RWPE1 (cell line): ENCODE measurements at regions of chr1 and their contacts with region 1.

Region 1: GRCh38 chr1:201385299-201385891 is 7.9 kb upstream of the TNNT2 start:
- DNase-seq: peak; percentile 89
- H3K27ac ChIP-seq: peak overlapping the region; percentile 71
- CTCF ChIP-seq: peak; percentile 89

Region 2: DNA sequence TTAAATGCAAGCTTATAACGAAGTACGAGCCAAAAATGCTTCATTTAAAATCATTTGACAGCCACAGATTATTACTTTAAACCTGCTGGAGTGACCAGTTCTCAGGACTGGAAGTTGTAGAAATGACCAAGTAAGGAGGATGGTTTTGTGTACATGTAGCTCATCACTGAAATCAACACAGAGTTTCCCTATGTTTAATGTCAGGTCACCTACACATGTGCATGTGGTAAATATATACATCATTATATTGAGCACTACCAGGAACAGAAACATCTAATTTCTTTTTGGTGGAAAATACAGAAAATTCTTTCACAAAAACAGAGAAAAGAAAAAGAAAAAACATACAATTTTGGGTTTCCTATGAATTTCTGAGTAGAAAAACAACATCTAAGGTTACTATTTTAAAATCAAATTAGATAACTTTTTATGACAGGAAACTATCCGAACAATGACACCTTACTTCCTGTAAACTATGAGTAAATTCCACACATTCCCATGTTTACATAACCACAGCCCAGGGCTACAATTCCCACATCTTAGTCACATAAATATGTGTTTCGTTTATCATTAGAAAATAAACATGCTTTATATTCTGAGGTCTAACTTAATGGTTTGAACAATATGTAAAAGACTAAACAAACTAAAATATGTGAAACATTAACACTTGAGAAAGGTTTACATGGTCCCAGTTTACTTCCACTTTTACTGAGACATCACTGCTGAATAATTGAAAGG is 1049.1 kb before region 1 on chr1:
- CTCF ChIA-PET with region 1: no interaction called
- POLR2A ChIA-PET with region 1: no interaction called
- DNase-seq: peak; percentile 89
- H3K27ac ChIP-seq: no peak overlapping the region
- CTCF ChIP-seq: no peak

Region 3: DNA sequence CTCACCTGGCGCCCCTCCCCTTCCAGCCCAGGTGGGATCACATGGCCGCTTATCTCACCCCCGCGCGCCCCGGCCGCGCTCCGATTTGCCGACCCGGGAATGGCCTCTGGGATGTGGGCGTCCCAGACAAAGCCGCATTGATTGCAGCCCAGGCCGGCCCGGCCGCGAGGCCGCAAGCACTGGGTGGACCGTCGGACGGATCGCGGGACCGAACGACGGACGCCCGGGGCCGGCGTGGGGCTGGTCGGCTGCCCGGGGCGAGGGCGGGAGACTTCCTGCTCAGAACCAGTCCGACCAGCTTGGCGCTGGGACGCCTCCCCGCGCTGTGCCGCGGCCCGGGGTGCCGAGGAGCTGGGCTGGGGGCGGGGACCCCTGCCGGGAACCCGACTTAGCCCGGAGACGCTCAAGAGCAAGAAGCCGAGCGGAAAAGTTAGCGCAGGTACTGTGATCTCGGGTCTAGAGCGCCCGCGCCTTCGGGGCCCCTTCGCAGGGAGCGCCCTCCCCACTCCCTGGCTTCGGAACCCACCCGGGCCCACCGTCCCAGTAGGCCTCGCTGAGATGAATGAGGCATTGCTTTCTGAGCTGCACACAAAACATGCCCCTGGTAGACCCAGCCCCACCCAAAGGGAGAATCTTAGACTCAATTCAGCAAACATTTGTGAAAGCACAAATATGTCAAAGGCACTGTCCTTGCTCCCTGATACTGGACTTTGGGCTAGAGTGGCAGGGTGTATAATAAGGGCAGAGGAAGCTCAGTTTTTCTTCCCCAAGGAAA is 14.1 kb after region 1 on chr1:
- CTCF ChIA-PET with region 1: interaction called, 32 read pairs
- POLR2A ChIA-PET with region 1: interaction called, 5 read pairs
- DNase-seq: peak; percentile 87
- H3K27ac ChIP-seq: peak overlapping the region; percentile 91
- CTCF ChIP-seq: no peak

Region 4: GRCh38 chr1:201408176-201408833 is 22.9 kb after region 1 on chr1:
- CTCF ChIA-PET with region 1: interaction called, 14 read pairs
- POLR2A ChIA-PET with region 1: interaction called, 4 read pairs
- DNase-seq: peak; percentile 87
- H3K27ac ChIP-seq: no peak overlapping the region
- CTCF ChIP-seq: peak; percentile 96